B cell (primary cell): ENCODE measurements at regions of chr18 and their contacts with region 1.

Region 1: DNA sequence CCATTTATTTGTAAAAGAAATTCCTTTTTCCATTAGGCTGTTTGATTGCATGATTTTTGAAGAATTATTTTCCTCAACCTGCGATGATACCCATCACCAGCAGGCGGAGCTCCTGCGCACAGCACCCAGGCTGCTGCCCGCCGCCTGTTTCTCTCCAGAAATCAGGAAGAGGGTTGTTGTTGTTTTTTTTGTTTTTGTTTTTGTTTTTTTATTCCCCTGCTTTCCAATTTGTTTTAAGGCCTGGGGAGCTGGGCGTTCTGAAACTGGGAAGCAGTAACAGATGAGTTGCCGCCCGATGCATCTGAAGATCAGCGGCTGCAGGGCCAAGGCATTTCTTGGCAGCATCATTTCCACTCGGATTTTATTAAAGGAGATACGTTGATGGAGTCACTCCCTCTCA is 132.1 kb downstream of the MBP start:
- DNase-seq: peak; percentile 70
- ATAC-seq: peak; percentile 57
- H3K4me3 ChIP-seq: no peak overlapping the region
- H3K4me3 Mint-ChIP-seq: no peak overlapping the region
- H3K27ac ChIP-seq: no peak overlapping the region
- H3K27ac Mint-ChIP-seq: peak overlapping the region; percentile 61
- H3K4me1 ChIP-seq: peaks cover 12 to 19% of the 10 kb centered on the region in 2 donors
- H3K4me1 Mint-ChIP-seq: peaks cover 22% of the 10 kb centered on the region
- H3K27me3 ChIP-seq: peaks cover 0 to 2% (median 0%) of the 10 kb centered on the region in 4 experiments
- H3K27me3 Mint-ChIP-seq: no peaks in the 10 kb centered on the region
- CTCF ChIP-seq: peak; percentile 99

Region 2: GRCh38 chr18:76958692-76959341 is 41.7 kb before region 1 on chr18:
- CTCF ChIA-PET with region 1: interaction called, 13 read pairs
- POLR2A ChIA-PET with region 1: no interaction called
- intact Hi-C with region 1: no loop called
- DNase-seq: no peak
- ATAC-seq: no peak
- H3K4me3 ChIP-seq: no peak overlapping the region
- H3K4me3 Mint-ChIP-seq: no peak overlapping the region
- H3K27ac ChIP-seq: no peak overlapping the region
- H3K27ac Mint-ChIP-seq: peak overlapping the region; percentile 32
- H3K4me1 ChIP-seq: peaks cover 25 to 27% of the 10 kb centered on the region in 2 donors
- H3K4me1 Mint-ChIP-seq: peaks cover 33% of the 10 kb centered on the region
- H3K27me3 ChIP-seq: no peaks in the 10 kb centered on the region
- H3K27me3 Mint-ChIP-seq: no peaks in the 10 kb centered on the region
- CTCF ChIP-seq: no peak

Region 3: DNA sequence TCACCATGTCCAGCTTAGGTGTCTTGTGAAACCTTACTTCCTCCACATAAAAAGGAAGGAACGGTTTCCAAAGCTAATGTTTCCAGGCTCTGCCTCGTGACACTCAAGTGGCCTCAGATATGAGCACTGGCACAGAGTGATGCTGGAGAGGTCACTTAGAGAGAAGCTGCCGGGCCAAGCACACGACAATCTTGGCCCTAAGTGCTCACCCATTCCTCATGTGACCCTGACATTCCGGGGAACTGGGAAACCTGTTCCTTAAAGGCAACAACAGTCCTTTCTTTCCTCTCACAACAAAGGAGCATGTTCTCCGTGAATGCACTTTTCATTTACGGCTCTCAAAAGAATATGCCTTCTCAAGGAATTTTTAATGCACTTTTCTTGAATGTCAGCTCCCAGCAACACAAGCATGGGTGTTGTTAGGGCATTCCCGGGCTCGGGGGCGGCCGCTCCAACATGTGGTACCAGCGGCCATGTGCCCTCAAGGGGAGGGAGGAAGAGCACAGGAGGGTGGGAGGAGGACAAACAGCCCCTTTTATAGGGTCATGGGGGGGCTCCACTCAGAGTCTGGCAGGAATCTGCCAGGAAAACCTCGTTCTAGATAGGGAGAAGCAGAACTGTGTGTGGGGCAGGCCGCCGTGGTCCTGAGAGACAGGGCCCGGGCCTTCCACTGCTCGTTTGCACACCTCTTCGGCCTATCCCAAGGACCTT is 13.4 kb after region 1 on chr18:
- CTCF ChIA-PET with region 1: interaction called, 10 read pairs
- POLR2A ChIA-PET with region 1: no interaction called
- intact Hi-C with region 1: no loop called
- DNase-seq: no peak
- ATAC-seq: no peak
- H3K4me3 ChIP-seq: no peak overlapping the region
- H3K4me3 Mint-ChIP-seq: no peak overlapping the region
- H3K27ac ChIP-seq: no peak overlapping the region
- H3K27ac Mint-ChIP-seq: no peak overlapping the region
- H3K4me1 ChIP-seq: no peaks in the 10 kb centered on the region
- H3K4me1 Mint-ChIP-seq: peaks cover 5% of the 10 kb centered on the region
- H3K27me3 ChIP-seq: no peaks in the 10 kb centered on the region
- H3K27me3 Mint-ChIP-seq: no peaks in the 10 kb centered on the region
- CTCF ChIP-seq: no peak

Region 4: GRCh38 chr18:77067291-77068061 is 66.9 kb after region 1 on chr18:
- CTCF ChIA-PET with region 1: interaction called, 29 read pairs
- POLR2A ChIA-PET with region 1: interaction called, 4 read pairs
- intact Hi-C with region 1: no loop called
- DNase-seq: peak; percentile 48
- ATAC-seq: peak; percentile 24
- H3K4me3 ChIP-seq: peak overlapping the region in 1 of 5 experiments; percentile 49
- H3K4me3 Mint-ChIP-seq: peak overlapping the region; percentile 82
- H3K27ac ChIP-seq: peak overlapping the region; percentile 77 to 97
- H3K27ac Mint-ChIP-seq: peak overlapping the region; percentile 98
- H3K4me1 ChIP-seq: peaks cover 72 to 84% of the 10 kb centered on the region in 2 donors
- H3K4me1 Mint-ChIP-seq: peaks cover 99% of the 10 kb centered on the region
- H3K27me3 ChIP-seq: no peaks in the 10 kb centered on the region
- H3K27me3 Mint-ChIP-seq: no peaks in the 10 kb centered on the region
- CTCF ChIP-seq: no peak

Region 5: GRCh38 chr18:77108001-77108692 is 107.6 kb after region 1 on chr18:
- CTCF ChIA-PET with region 1: interaction called, 12 read pairs
- POLR2A ChIA-PET with region 1: no interaction called
- intact Hi-C with region 1: no loop called
- DNase-seq: peak; percentile 59
- ATAC-seq: peak; percentile 48
- H3K4me3 ChIP-seq: no peak overlapping the region
- H3K4me3 Mint-ChIP-seq: peak overlapping the region; percentile 71
- H3K27ac ChIP-seq: peak overlapping the region; percentile 21 to 70
- H3K27ac Mint-ChIP-seq: peak overlapping the region; percentile 26
- H3K4me1 ChIP-seq: peaks cover 41 to 47% of the 10 kb centered on the region in 2 donors
- H3K4me1 Mint-ChIP-seq: peaks cover 66% of the 10 kb centered on the region
- H3K27me3 ChIP-seq: no peaks in the 10 kb centered on the region
- H3K27me3 Mint-ChIP-seq: no peaks in the 10 kb centered on the region
- CTCF ChIP-seq: no peak

Region 6: GRCh38 chr18:77207540-77207939 is 207.0 kb after region 1 on chr18:
- CTCF ChIA-PET with region 1: interaction called, 167 read pairs
- POLR2A ChIA-PET with region 1: no interaction called
- intact Hi-C with region 1: no loop called
- DNase-seq: peak; percentile 65
- ATAC-seq: peak; percentile 65
- H3K4me3 ChIP-seq: no peak overlapping the region
- H3K4me3 Mint-ChIP-seq: peak overlapping the region; percentile 70
- H3K27ac ChIP-seq: no peak overlapping the region
- H3K27ac Mint-ChIP-seq: peak overlapping the region; percentile 65
- H3K4me1 ChIP-seq: peaks cover 4 to 28% of the 10 kb centered on the region in 2 donors
- H3K4me1 Mint-ChIP-seq: peaks cover 30% of the 10 kb centered on the region
- H3K27me3 ChIP-seq: peaks cover 0 to 7% (median 0%) of the 10 kb centered on the region in 4 experiments
- H3K27me3 Mint-ChIP-seq: peaks cover 4% of the 10 kb centered on the region
- CTCF ChIP-seq: peak; percentile 70

Region 7: GRCh38 chr18:77711096-77711495 is 710.6 kb after region 1 on chr18:
- CTCF ChIA-PET with region 1: no interaction called
- POLR2A ChIA-PET with region 1: no interaction called
- intact Hi-C with region 1: no loop called
- DNase-seq: no peak
- ATAC-seq: no peak
- H3K4me3 ChIP-seq: no peak overlapping the region
- H3K4me3 Mint-ChIP-seq: no peak overlapping the region
- H3K27ac ChIP-seq: no peak overlapping the region
- H3K27ac Mint-ChIP-seq: no peak overlapping the region
- H3K4me1 ChIP-seq: no peaks in the 10 kb centered on the region
- H3K4me1 Mint-ChIP-seq: no peaks in the 10 kb centered on the region
- H3K27me3 ChIP-seq: peaks cover 0 to 2% (median 0%) of the 10 kb centered on the region in 4 experiments
- H3K27me3 Mint-ChIP-seq: peaks cover 1% of the 10 kb centered on the region
- CTCF ChIP-seq: peak; percentile 6